ENCODE measurements at regions of chr2 and their contacts with region 1.

Region 1: DNA sequence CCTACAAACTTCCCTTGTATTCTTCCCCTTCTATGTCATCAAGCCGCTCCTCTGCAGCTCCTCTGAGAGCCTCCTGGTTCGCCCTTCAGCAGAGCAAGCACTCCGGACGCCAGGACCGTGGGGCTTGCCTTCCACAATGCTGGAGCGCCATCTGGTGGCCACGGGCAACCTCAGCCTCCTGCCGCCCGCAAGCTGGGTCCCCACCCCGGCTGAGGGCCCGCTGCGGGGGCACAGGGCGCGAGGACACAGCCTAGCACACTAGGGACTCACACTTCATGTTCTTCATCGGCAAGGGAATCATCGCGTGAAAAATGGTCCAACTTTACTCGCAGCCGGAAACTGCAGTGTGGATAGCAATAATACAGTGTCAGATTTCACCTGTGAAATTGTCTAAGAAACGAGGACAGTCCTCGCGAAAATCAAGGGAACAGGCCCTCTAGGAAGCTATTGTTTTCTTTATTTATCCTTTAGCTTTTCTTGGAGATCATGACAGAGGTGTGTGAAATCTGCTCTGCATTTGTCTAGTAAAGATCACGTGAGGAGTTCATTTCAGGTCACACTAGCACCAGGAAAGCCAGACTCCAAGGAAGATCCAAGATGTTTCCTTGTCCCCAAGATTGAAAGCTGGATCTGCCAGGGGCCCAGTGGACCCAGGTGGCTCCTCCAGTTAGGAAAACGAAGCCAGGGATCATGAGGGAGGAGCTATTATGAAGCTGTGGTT is 5.8 kb downstream of the PRLH start:
- DNase-seq: peak; percentile 83 to 85
- ATAC-seq: peak; percentile 91 to 95
- H3K4me3 ChIP-seq: peak overlapping the region; percentile 15 to 45 (median 38)
- H3K27ac ChIP-seq: peak overlapping the region; percentile 36 to 69 (median 47)
- H3K4me1 ChIP-seq: peaks cover 13% of the 10 kb centered on the region in 2 donors
- H3K27me3 ChIP-seq: no peaks in the 10 kb centered on the region
- CTCF ChIP-seq: peak; percentile 99
- POLR2A ChIP-seq: no peak

Region 2: DNA sequence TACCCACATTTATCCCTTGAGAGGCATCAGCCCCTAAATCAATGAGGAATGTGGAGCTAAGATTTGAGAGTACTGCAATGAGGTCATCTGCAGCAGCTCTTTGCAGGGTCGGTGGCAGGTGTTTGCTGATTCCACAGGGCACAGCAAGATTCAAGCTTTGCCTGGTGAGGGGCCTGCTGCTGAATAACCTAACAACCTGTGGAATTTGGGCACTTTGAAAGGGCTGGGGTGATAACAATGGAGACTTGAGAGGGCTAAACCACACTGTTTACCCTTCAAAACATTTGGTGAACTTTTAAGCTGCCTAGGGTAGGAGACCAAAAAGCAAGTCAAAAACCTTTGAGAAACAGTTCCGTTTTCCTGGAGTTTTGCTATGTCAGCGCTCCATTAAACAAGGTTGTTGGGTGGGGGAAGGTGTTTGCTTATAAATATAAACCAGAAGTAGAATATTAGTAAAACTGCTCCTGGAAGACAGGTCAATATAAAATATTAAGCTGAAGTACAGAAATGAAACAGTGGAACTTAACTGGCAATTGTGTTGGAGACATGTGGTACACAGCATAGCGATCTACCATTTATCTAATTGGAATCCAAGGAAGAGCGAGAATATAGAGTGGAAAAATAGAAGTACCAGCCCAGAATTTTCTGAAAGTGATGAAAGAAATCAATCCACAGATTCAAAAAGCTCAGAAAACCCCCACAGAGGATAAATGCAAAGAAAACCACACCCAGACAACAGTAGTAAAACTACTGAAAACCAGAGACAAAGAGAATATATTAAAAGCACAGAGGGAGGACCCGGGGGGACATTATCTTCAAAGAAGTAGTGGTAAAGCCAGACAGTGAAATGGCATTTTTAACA is 470.8 kb before region 1 on chr2:
- in situ Hi-C with region 1: loop called in 1 of 4 experiments (anchors 10 kb)
- intact Hi-C with region 1: no loop called
- DNase-seq: no peak
- ATAC-seq: no peak
- H3K4me3 ChIP-seq: no peak overlapping the region
- H3K27ac ChIP-seq: peak overlapping the region; percentile 63 to 93 (median 82)
- H3K4me1 ChIP-seq: peaks cover 55 to 66% of the 10 kb centered on the region in 2 donors
- H3K27me3 ChIP-seq: no peaks in the 10 kb centered on the region
- CTCF ChIP-seq: no peak
- POLR2A ChIP-seq: no peak

Region 3: DNA sequence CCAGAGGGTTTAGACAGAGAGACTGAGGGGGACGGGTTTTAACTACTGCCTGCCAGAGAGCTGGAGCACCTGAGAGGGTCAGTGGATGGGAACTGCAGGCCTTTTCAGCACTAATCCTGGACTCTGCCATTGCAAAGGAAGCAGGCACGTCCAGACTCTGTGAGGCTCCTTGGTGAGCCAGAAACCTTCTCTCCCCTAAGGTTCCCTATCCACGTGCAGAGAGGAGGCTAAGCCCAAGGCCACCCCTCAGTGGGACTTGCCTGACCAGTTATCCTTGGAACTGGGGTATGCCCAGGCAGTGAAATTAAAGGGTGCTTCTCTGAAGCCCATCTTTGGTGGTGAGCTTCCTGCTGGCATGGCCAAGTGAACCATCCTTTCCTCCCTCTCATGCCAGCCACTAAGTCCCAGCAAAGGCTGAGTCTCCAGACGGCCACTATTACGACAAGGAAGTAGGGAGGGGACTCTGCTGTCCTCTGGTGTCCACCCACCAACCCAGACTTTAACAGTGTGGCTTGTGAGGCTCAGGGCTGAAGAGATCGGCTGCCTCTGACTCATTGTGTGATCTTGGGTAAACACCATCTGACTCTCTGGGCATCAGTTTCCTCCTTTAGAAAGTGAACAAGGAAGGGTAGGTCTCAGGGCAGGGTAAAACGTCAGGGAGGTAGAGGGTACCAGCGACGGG is 89.0 kb before region 1 on chr2:
- in situ Hi-C with region 1: no loop called
- intact Hi-C with region 1: no loop called
- DNase-seq: peak in 1 of 2 donors; percentile 59
- ATAC-seq: peak; percentile 21 to 46
- H3K4me3 ChIP-seq: no peak overlapping the region
- H3K27ac ChIP-seq: peak overlapping the region; percentile 73 to 89 (median 82)
- H3K4me1 ChIP-seq: peaks cover 14 to 32% of the 10 kb centered on the region in 2 donors
- H3K27me3 ChIP-seq: peaks cover 0 to 6% (median 0%) of the 10 kb centered on the region in 3 donors
- CTCF ChIP-seq: peak in 1 of 5 experiments; percentile 32
- POLR2A ChIP-seq: peak; percentile 27 to 41

Region 4: GRCh38 chr2:237529452-237530402 is 42.5 kb before region 1 on chr2:
- in situ Hi-C with region 1: no loop called
- intact Hi-C with region 1: no loop called
- DNase-seq: no peak
- ATAC-seq: no peak
- H3K4me3 ChIP-seq: no peak overlapping the region
- H3K27ac ChIP-seq: no peak overlapping the region
- H3K4me1 ChIP-seq: no peaks in the 10 kb centered on the region
- H3K27me3 ChIP-seq: no peaks in the 10 kb centered on the region
- CTCF ChIP-seq: no peak
- POLR2A ChIP-seq: no peak

Region 5: DNA sequence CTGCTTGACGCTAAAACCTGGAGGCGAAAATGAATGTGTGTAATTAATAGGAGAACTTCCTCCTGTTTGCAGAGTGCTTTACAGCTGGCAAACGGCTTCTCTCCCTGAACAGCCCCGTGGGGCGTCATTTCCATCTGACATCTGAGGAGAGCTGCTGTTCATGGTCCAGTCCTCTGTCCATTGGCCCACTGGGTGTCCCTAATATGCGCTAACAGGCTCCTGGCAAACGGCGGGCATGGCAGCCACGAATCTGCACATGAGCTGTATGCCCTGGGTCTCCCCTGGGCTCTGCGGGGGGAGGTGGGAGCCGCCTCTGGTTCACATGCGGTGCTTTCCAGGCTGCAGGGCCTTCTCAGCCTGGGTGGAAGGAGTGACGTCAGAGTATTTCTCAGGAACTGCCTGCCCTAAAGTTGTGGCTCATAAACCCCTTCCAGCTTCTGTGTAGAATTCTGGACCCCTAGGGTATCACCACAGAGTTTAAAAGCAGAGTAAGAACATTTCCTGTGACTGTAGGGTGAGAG is 128.4 kb after region 1 on chr2:
- in situ Hi-C with region 1: no loop called
- intact Hi-C with region 1: no loop called
- DNase-seq: peak in 1 of 2 donors; percentile 83
- ATAC-seq: peak; percentile 73 to 74
- H3K4me3 ChIP-seq: peak overlapping the region in 1 of 4 donors; percentile 6
- H3K27ac ChIP-seq: peak overlapping the region; percentile 85 to 98 (median 95)
- H3K4me1 ChIP-seq: peaks cover 91 to 100% of the 10 kb centered on the region in 2 donors
- H3K27me3 ChIP-seq: no peaks in the 10 kb centered on the region
- CTCF ChIP-seq: no peak
- POLR2A ChIP-seq: peak in 1 of 2 donors; percentile 6

Region 6: GRCh38 chr2:238305092-238305862 is 733.1 kb after region 1 on chr2:
- in situ Hi-C with region 1: no loop called
- intact Hi-C with region 1: no loop called
- DNase-seq: no peak
- ATAC-seq: no peak
- H3K4me3 ChIP-seq: no peak overlapping the region
- H3K27ac ChIP-seq: no peak overlapping the region
- H3K4me1 ChIP-seq: peaks cover 0 to 2% of the 10 kb centered on the region in 2 donors
- H3K27me3 ChIP-seq: no peaks in the 10 kb centered on the region
- CTCF ChIP-seq: no peak
- POLR2A ChIP-seq: no peak